Mammary epithelial cell (primary cell): ENCODE measurements at regions of chr7 and their contacts with region 1.

Region 1: DNA sequence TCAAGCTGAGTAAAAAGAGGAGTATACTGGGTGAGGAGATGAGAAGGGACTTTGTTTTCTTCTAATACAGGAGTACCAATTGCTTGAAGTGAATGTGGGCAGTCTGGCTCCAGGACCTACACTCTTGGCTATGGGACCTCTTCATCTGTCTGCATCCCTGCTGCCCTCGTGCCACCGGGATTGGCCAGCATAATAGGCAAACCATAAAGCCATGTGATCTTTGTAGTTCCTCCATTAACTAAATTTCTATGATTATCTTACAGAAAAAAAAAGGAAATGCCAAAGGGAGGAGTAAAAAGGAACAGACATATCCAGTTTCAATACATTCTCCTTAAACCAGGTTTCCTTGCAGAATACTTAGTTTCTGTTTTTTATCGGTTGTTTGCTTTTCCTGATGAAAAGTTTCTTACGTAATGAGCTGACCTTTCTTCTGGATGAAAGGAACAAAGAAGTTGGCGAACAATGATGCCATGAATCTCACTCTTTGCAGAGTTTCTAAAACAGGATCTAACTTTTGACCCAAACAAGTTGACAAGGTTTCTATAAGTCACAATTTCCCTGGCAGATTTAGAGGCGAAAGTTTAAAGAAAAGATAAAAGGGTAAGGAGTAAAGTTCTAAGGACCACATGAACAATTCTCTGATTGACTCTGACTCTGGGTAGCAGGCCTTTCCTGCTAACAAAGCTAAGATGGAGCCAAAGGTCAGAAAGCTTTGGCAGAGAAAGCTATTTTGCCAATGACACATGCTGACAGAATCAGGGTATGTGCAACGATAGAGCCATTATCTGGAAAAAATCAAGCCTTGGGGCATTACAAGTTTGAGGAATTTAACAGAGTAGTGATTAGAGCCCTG is 54.1 kb downstream of the LAMB1 start:
- DNase-seq: peak; percentile 88
- H3K4me3 ChIP-seq: no peak overlapping the region
- H3K27ac ChIP-seq: peak overlapping the region; percentile 36
- H3K4me1 ChIP-seq: peaks cover 80% of the 10 kb centered on the region
- H3K27me3 ChIP-seq: no peaks in the 10 kb centered on the region
- CTCF ChIP-seq: no peak

Region 2: GRCh38 chr7:107890962-107891635 is 57.8 kb before region 1 on chr7 and contains the start of gene DLD:
- CTCF ChIA-PET with region 1: no interaction called
- dilution Hi-C with region 1: no loop called
- in situ Hi-C with region 1: no loop called
- intact Hi-C with region 1: loop called (anchors 1 kb)
- DNase-seq: peak; percentile 87
- H3K4me3 ChIP-seq: peak within 1 kb of the TSS; percentile 49 to 74 (median 69)
- H3K27ac ChIP-seq: peak within 1 kb of the TSS; percentile 79
- H3K4me1 ChIP-seq: peaks cover 13% of the 10 kb centered on the region
- H3K27me3 ChIP-seq: no peaks in the 10 kb centered on the region
- CTCF ChIP-seq: no peak
- total RNA-seq, gene DLD: 52.7 to 89.8 TPM

Region 3: GRCh38 chr7:107972075-107972482 is 23.2 kb after region 1 on chr7:
- CTCF ChIA-PET with region 1: no interaction called
- dilution Hi-C with region 1: no loop called
- in situ Hi-C with region 1: no loop called
- intact Hi-C with region 1: loop called (anchors 2 kb)
- DNase-seq: no peak
- H3K4me3 ChIP-seq: no peak overlapping the region
- H3K27ac ChIP-seq: peak overlapping the region; percentile 45
- H3K4me1 ChIP-seq: peaks cover 33% of the 10 kb centered on the region
- H3K27me3 ChIP-seq: no peaks in the 10 kb centered on the region
- CTCF ChIP-seq: no peak